Brain microvascular endothelial cell (primary cell): ENCODE measurements at regions of chr1 and their contacts with region 1.

Region 1: GRCh38 chr1:184075055-184076029 is 23.8 kb downstream of the TSEN15 start:
- DNase-seq: peak; percentile 64
- H3K4me3 ChIP-seq: no peak overlapping the region
- H3K27ac ChIP-seq: no peak overlapping the region
- H3K27me3 ChIP-seq: no peaks in the 10 kb centered on the region
- CTCF ChIP-seq: peak; percentile 55

Region 2: DNA sequence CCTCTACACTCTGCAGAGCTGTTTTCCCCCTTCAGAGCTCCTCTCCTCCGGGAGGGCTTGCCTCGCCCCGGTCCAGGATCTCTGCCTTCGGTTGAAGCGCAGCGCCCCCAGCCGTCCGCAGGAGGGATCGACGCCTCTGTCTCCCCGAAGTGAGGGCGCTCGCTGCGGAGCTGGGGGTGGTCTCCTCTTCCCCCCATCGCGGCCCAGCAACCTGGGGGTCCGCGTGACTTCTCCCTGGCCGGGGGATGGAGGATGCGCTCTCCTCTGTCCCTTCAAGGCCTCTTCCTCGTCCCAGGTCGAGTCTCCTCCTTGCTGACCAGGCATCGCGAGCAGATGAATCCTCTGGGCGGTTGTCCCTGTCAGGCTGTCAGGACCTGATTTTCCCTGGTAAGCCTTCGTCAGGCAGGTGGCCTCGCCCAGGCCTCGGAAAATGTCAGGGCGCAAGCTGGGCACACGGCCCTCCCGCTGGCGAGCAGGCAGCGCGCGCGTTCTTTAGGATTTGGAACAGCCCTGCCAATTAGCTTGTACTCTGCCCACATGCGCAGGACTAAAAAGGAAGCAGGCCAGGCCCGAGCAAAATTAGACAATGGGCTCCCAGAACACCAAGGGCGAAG is 588.8 kb after region 1 on chr1:
- in situ Hi-C with region 1: loop called (anchors 25 kb)
- DNase-seq: peak; percentile 29
- H3K4me3 ChIP-seq: peak overlapping the region; percentile 54
- H3K27ac ChIP-seq: no peak overlapping the region
- H3K27me3 ChIP-seq: no peaks in the 10 kb centered on the region
- CTCF ChIP-seq: peak; percentile 96